Mammary epithelial cell (primary cell): ENCODE measurements at regions of chr2 and their contacts with region 1.

Region 1: GRCh38 chr2:69330781-69331180 is 56.2 kb downstream of the GFPT1 start:
- DNase-seq: no peak
- H3K4me3 ChIP-seq: no peak overlapping the region
- H3K27ac ChIP-seq: no peak overlapping the region
- H3K4me1 ChIP-seq: no peaks in the 10 kb centered on the region
- H3K27me3 ChIP-seq: no peaks in the 10 kb centered on the region
- CTCF ChIP-seq: no peak

Region 2: DNA sequence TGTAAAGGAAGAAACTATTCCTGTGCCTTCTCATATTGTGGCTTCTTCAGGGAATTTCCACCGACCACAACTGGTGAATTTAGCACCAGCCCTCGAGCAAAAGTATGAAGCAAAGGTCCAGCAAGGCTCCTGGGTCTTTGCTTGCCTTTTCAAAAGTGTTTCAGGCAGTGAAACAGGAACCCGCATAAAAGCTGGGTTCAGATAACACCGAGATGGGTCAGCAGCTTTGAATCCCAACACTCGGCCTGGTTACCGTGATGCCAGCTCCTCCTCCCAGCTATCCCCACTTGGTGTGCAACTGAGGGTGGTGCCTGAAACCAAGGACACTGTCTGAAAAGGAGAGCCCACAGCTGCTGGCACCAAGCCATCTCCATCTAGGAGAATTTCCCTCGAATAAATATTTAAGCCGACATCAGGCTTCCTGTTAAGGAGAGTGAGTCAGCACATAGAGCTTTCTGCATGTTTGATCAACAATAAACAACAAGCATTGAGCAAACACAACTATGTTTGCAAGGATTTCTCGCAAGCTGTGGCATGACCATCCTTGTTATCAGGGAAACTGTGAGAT is 248.3 kb before region 1 on chr2:
- CTCF ChIA-PET with region 1: no interaction called
- dilution Hi-C with region 1: no loop called
- in situ Hi-C with region 1: no loop called
- intact Hi-C with region 1: no loop called
- DNase-seq: peak; percentile 47
- H3K4me3 ChIP-seq: no peak overlapping the region
- H3K27ac ChIP-seq: no peak overlapping the region
- H3K4me1 ChIP-seq: peaks cover 9% of the 10 kb centered on the region
- H3K27me3 ChIP-seq: no peaks in the 10 kb centered on the region
- CTCF ChIP-seq: no peak

Region 3: GRCh38 chr2:69345434-69345833 is 14.7 kb after region 1 on chr2:
- CTCF ChIA-PET with region 1: no interaction called
- dilution Hi-C with region 1: no loop called
- in situ Hi-C with region 1: no loop called
- intact Hi-C with region 1: loop called (anchors 1 kb)
- DNase-seq: no peak
- H3K4me3 ChIP-seq: no peak overlapping the region
- H3K27ac ChIP-seq: no peak overlapping the region
- H3K4me1 ChIP-seq: no peaks in the 10 kb centered on the region
- H3K27me3 ChIP-seq: no peaks in the 10 kb centered on the region
- CTCF ChIP-seq: no peak

Region 4: DNA sequence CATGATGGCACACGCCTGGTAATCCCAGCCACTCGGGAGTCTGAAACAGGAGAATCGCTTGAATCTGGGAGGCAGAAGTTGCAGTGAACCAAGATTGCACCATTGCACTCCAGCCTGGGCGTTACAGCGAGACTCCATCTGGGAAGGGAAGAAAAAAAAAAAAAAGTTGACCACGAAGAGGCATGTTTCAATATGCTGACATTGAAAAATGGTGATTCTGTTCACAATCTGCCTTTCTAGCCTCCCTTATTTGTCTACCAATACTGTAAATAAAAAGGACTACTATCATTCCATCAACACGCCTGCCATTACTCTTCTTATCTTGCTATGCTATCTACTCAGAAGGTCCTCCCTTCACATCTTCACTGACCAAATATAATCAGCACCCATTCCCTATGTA is 37.8 kb after region 1 on chr2:
- CTCF ChIA-PET with region 1: no interaction called
- dilution Hi-C with region 1: no loop called
- in situ Hi-C with region 1: no loop called
- intact Hi-C with region 1: loop called (anchors 5 kb)
- DNase-seq: no peak
- H3K4me3 ChIP-seq: no peak overlapping the region
- H3K27ac ChIP-seq: no peak overlapping the region
- H3K4me1 ChIP-seq: no peaks in the 10 kb centered on the region
- H3K27me3 ChIP-seq: no peaks in the 10 kb centered on the region
- CTCF ChIP-seq: no peak